ENCODE measurements at regions of chr11 and their contacts with region 1.

Region 1: GRCh38 chr11:122814401-122814800 is 23.9 kb upstream of the CRTAM start:
- DNase-seq: peak; percentile 30
- ATAC-seq: no peak
- H3K4me3 Mint-ChIP-seq: no peak overlapping the region
- H3K27ac Mint-ChIP-seq: no peak overlapping the region
- H3K4me1 Mint-ChIP-seq: peaks cover 41% of the 10 kb centered on the region
- H3K27me3 Mint-ChIP-seq: no peaks in the 10 kb centered on the region

Region 2: GRCh38 chr11:122843281-122844141 is 29.1 kb after region 1 on chr11:
- CTCF ChIA-PET with region 1: interaction called, 337 read pairs
- POLR2A ChIA-PET with region 1: interaction called, 3 read pairs
- DNase-seq: peak; percentile 82
- ATAC-seq: peak; percentile 84
- H3K4me3 Mint-ChIP-seq: peak overlapping the region; percentile 67
- H3K27ac Mint-ChIP-seq: peak overlapping the region; percentile 94
- H3K4me1 Mint-ChIP-seq: peaks cover 80% of the 10 kb centered on the region
- H3K27me3 Mint-ChIP-seq: no peaks in the 10 kb centered on the region

Measured in activated CD8-positive, alpha-beta T cell treated with anti-CD3 and anti-CD28 coated beads, Interleukin-2, amount 10 ng/mL, durations not matched to agents 7 days and 5 days (primary cell).